Heart left ventricle (tissue), 16 donors: ENCODE measurements at regions of chr7 and their contacts with region 1.

Region 1: DNA sequence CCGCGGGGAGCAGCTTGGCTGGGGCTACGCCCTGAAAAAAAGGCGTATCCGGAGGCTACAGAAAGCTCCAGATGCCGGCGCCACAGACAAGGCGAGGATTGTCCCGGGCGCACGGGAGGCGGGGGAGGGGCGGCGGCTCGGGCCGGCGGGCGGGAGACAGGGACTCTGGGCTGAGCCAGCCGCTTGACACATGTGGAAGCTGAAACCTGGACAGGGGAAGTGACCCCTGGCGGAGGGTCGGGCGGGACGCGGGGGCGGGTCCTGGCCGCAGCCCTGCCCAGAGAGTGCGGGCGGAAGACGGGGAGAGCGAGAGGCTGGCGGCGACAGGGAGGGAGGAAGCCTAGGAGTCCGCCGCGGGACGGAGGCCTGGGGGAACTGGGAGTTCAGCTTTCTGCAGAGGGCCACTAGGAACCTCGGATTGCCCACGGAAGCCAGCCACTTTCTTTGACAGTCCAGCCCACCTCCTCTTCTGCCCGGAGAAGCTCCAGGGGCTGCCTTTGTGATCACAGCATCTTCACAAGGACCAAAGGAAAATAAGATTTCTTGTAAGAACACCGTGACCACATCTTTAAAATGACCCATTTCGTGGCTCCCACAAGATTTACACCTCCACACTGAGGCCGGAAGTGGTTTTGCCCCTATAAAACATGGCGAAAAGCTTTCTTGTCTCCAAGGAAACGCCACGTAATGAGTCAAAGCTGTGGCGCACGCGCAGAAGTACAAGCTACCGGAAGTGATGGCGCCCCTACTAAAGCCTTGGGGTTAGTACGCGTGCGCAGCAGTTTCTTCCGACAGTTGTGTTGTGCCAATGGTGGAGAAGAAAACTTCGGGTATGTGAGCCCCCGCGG is at the starts of genes PLOD3 and ZNHIT1:
- DNase-seq: peak; percentile 96 to 99 (median 97)
- ATAC-seq: peak; percentile 91 to 96 (median 94)
- H3K4me3 ChIP-seq: peak within 1 kb of the TSS; percentile 53 to 95 (median 80)
- H3K27ac ChIP-seq: peak within 1 kb of the TSS; percentile 82 to 97 (median 90)
- H3K4me1 ChIP-seq: peaks cover 4 to 48% (median 31%) of the 10 kb centered on the region in 12 donors
- H3K27me3 ChIP-seq: no peaks in the 10 kb centered on the region
- CTCF ChIP-seq: peak in 9 of 12 donors; percentile 9 to 53 (median 23)
- POLR2A ChIP-seq: peak in 1 of 2 donors; percentile 37
- total RNA-seq, gene PLOD3: 27.4 to 77.6 (median 42.0) TPM
- total RNA-seq, gene ZNHIT1: 47.0 to 88.1 (median 51.3) TPM

Region 2: GRCh38 chr7:101153969-101154692 is 63.5 kb before region 1 on chr7 and contains the start of gene AP1S1:
- intact Hi-C with region 1: no loop called
- DNase-seq: peak; percentile 93 to 97 (median 95)
- ATAC-seq: peak; percentile 87 to 99 (median 98)
- H3K4me3 ChIP-seq: peak within 1 kb of the TSS; percentile 71 to 92 (median 80)
- H3K27ac ChIP-seq: peak within 1 kb of the TSS in 7 of 12 donors; percentile 24 to 58 (median 48)
- H3K4me1 ChIP-seq: peaks cover 0 to 17% (median 9%) of the 10 kb centered on the region in 12 donors
- H3K27me3 ChIP-seq: peaks cover 0 to 8% (median 0%) of the 10 kb centered on the region in 9 donors
- CTCF ChIP-seq: no peak
- POLR2A ChIP-seq: peak in 1 of 2 donors; percentile 41
- total RNA-seq, gene AP1S1: 9.9 to 24.5 (median 12.8) TPM

Region 3: GRCh38 chr7:101235050-101235449 is 17.4 kb after region 1 on chr7:
- intact Hi-C with region 1: loop called in 1 of 10 experiments (anchors 2 kb)
- DNase-seq: no peak
- ATAC-seq: no peak
- H3K4me3 ChIP-seq: no peak overlapping the region
- H3K27ac ChIP-seq: no peak overlapping the region
- H3K4me1 ChIP-seq: peaks cover 0 to 53% (median 40%) of the 10 kb centered on the region in 12 donors
- H3K27me3 ChIP-seq: no peaks in the 10 kb centered on the region
- CTCF ChIP-seq: peak in 8 of 12 donors; percentile 6 to 38 (median 32)
- POLR2A ChIP-seq: no peak

Region 4: GRCh38 chr7:101244375-101245146 is 26.9 kb after region 1 on chr7 and contains the start of gene FIS1:
- intact Hi-C with region 1: loop called in 7 of 10 experiments (anchors 1 to 2 kb)
- DNase-seq: peak; percentile 94 to 97 (median 95)
- ATAC-seq: peak; percentile 98 to 99 (median 98)
- H3K4me3 ChIP-seq: peak within 1 kb of the TSS; percentile 66 to 95 (median 82)
- H3K27ac ChIP-seq: peak within 1 kb of the TSS; percentile 84 to 99 (median 95)
- H3K4me1 ChIP-seq: peaks cover 5 to 55% (median 37%) of the 10 kb centered on the region in 12 donors
- H3K27me3 ChIP-seq: no peaks in the 10 kb centered on the region
- CTCF ChIP-seq: peak in 11 of 12 donors; percentile 15 to 99 (median 93)
- POLR2A ChIP-seq: peak; percentile 43 to 85
- total RNA-seq, gene FIS1: 249 to 491 (median 282) TPM

Region 5: GRCh38 chr7:101251871-101252659 is 34.5 kb after region 1 on chr7:
- intact Hi-C with region 1: loop called in 4 of 10 experiments (anchors 5 kb)
- DNase-seq: peak; percentile 96 to 99 (median 99)
- ATAC-seq: peak; percentile 100
- H3K4me3 ChIP-seq: peak overlapping the region; percentile 66 to 98 (median 87)
- H3K27ac ChIP-seq: peak overlapping the region in 11 of 12 donors; percentile 17 to 81 (median 67)
- H3K4me1 ChIP-seq: peaks cover 3 to 24% (median 17%) of the 10 kb centered on the region in 12 donors
- H3K27me3 ChIP-seq: no peaks in the 10 kb centered on the region
- CTCF ChIP-seq: peak in 1 of 12 donors; percentile 9
- POLR2A ChIP-seq: peak in 1 of 2 donors; percentile 47

Region 6: GRCh38 chr7:101287032-101287431 is 69.4 kb after region 1 on chr7:
- intact Hi-C with region 1: loop called in 1 of 10 experiments (anchors 10 kb)
- DNase-seq: peak in 1 of 5 donors; percentile 26
- ATAC-seq: no peak
- H3K4me3 ChIP-seq: no peak overlapping the region
- H3K27ac ChIP-seq: no peak overlapping the region
- H3K4me1 ChIP-seq: peaks cover 0 to 6% (median 0%) of the 10 kb centered on the region in 12 donors
- H3K27me3 ChIP-seq: peaks cover 4 to 28% (median 9%) of the 10 kb centered on the region in 9 donors
- CTCF ChIP-seq: no peak
- POLR2A ChIP-seq: no peak